Panc1 (cell line): ENCODE measurements at regions of chr3 and their contacts with region 1.

Region 1: DNA sequence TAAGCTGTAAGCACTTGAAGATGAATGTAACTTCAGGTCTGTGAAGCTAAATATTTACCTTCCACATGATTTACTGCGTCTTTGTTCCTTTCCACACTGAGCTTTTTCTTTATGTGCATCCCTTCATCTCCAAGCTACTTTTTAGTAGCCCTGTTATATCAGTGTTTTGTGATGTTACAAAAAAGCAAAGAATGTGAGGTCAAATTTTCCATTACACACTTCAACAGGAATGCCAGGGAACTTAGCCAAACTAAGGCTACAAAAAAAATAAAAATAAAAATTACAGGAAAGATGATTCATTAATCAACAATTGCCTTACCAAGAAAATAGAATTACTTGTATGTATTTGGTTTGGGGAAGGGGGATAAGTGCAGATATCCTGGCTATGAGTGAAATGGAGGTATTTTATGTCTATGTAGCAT is 73.0 kb downstream of the FILIP1L start:
- DNase-seq: peak; percentile 95
- ATAC-seq: peak; percentile 55
- H3K4me3 ChIP-seq: no peak overlapping the region
- H3K27ac ChIP-seq: peak overlapping the region; percentile 74
- H3K4me1 ChIP-seq: peaks cover 37% of the 10 kb centered on the region
- H3K27me3 ChIP-seq: no peaks in the 10 kb centered on the region
- CTCF ChIP-seq: no peak

Region 2: DNA sequence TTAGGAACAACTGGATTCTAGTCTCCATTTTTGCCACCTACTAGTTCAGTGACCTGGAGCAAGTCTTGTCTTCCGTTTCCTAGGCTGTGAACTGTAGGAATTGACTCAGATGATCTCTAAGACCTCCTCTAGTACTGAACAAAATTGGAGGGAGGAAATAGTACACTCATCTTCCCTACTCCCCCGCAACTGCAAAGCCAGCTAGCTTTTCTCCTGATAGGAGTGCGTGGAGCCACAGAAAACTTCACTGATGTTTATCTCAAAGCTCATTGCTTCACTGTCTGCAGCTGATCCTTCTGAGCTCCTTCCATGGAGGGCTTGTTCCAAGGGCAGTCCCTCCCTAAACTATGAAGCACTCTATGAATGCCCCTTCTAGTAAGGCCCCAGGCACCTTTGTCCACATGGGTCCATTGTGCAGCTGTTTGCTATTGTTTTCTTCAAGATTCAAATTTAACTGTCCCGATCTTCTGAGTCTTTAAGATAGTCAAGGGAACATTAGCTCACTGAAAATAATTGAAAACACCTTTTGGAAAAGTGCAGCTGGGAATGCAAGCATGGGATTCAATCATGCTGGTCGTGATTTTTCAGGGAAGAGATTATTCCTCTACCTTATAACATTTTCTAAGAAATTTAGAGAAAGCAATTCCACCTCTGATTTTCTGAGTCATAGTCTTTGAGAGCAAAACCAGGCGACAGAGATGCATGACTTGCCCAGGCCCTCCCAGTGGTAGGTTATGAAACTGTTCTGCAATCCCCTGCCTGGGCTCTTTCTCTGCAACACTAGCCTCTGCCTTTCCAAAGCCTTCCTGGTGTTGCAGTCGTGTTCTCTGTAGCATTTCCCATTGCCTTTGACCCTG is 48.7 kb after region 1 on chr3:
- CTCF ChIA-PET with region 1: no interaction called
- POLR2A ChIA-PET with region 1: no interaction called
- in situ Hi-C with region 1: no loop called
- intact Hi-C with region 1: no loop called
- DNase-seq: no peak
- ATAC-seq: peak; percentile 91
- H3K4me3 ChIP-seq: no peak overlapping the region
- H3K27ac ChIP-seq: peak overlapping the region; percentile 36; the same call in 1 of the 2 replicates
- H3K4me1 ChIP-seq: peaks cover 7% of the 10 kb centered on the region; the same call in 1 of the 2 replicates
- H3K27me3 ChIP-seq: no peaks in the 10 kb centered on the region
- CTCF ChIP-seq: peak; percentile 77

Region 3: GRCh38 chr3:100169201-100169920 is 128.0 kb after region 1 on chr3:
- CTCF ChIA-PET with region 1: no interaction called
- POLR2A ChIA-PET with region 1: interaction called, 11 read pairs
- in situ Hi-C with region 1: no loop called
- intact Hi-C with region 1: no loop called
- DNase-seq: no peak
- ATAC-seq: no peak
- H3K4me3 ChIP-seq: no peak overlapping the region
- H3K27ac ChIP-seq: no peak overlapping the region
- H3K4me1 ChIP-seq: no peaks in the 10 kb centered on the region
- H3K27me3 ChIP-seq: no peaks in the 10 kb centered on the region
- CTCF ChIP-seq: no peak

Region 4: GRCh38 chr3:100982710-100983109 is 941.4 kb after region 1 on chr3:
- CTCF ChIA-PET with region 1: no interaction called
- POLR2A ChIA-PET with region 1: no interaction called
- in situ Hi-C with region 1: no loop called
- intact Hi-C with region 1: no loop called
- DNase-seq: no peak
- ATAC-seq: no peak
- H3K4me3 ChIP-seq: no peak overlapping the region
- H3K27ac ChIP-seq: no peak overlapping the region
- H3K4me1 ChIP-seq: no peaks in the 10 kb centered on the region
- H3K27me3 ChIP-seq: no peaks in the 10 kb centered on the region
- CTCF ChIP-seq: no peak